Endothelial cell of umbilical vein (primary cell): ENCODE measurements at regions of chr9 and their contacts with region 1.

Region 1: GRCh38 chr9:22119537-22120158 is 110.5 kb upstream of the CDKN2B start:
- DNase-seq: peak; percentile 53
- H3K4me3 ChIP-seq: no peak overlapping the region
- H3K27ac ChIP-seq: no peak overlapping the region
- H3K4me1 ChIP-seq: peaks cover 26% of the 10 kb centered on the region
- H3K27me3 ChIP-seq: no peaks in the 10 kb centered on the region
- CTCF ChIP-seq: peak; percentile 35 to 53
- POLR2A ChIP-seq: no peak

Region 2: DNA sequence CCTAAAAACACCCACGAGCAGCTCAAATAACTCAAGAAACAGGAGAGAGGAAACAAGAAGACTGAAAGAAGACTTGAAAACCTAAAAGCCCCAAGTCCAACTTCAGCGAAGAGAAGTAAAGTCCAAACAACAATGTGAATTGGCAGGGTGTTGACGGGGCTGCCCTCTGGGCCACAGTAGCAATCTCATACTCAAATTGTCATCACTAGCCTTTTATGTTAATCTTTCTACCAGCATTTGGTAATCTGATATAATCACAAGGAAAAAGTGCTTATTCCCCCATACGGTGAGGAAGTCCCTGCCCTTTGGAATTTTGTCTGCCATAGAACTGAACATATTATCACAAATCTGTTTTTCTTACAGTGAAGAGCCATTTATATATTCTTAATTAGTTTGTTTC is 586.1 kb before region 1 on chr9:
- CTCF ChIA-PET with region 1: no interaction called
- POLR2A ChIA-PET with region 1: no interaction called
- dilution Hi-C with region 1: no loop called
- intact Hi-C with region 1: no loop called
- DNase-seq: no peak
- H3K4me3 ChIP-seq: no peak overlapping the region
- H3K27ac ChIP-seq: no peak overlapping the region
- H3K4me1 ChIP-seq: no peaks in the 10 kb centered on the region
- H3K27me3 ChIP-seq: no peaks in the 10 kb centered on the region
- CTCF ChIP-seq: no peak
- POLR2A ChIP-seq: no peak

Region 3: DNA sequence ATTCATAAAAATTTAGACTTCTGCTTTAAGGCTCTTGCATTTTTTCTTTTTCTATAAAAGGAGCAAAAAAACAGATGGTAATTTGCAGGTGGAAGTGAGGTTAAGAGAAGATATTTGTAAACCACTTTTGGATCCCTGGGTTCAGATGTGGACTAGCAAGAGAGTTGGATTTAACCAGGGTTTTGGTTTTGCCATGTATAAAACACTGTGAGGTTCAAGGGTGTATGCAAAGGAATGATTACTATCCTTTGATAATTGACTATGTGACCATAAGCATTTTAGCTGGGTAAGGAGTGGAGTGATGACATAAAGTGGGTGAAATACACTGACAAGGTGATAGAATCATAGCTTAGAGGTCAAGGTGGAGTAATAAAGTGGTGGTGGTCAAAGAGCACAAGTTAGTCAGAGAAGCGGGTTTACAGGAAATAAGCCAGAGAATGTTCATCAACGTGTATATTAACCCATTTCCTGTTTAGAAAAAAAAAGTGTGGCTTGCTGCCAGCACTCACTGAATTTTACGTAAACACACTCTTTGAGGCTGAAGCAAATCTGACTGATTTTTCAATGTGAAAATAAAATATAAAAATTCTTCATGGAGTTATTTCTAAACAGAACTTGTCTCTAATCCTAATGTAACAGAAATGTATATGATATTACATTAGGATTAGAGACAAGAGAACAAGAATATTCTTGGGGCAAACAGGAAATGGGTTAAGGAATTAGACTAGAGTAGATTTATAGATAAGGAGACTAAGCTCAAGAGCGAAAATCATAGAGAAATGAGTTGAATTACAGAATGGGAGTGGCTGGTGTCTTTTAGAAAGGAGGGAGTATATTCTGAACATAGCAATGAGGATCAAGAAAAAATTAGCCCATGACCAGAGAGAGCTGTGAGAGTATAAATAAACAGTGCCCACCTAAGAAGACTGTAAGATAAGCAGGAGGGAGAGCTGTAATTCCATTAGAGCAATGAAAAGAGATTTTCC is 200.0 kb before region 1 on chr9:
- CTCF ChIA-PET with region 1: interaction called, 11 read pairs
- POLR2A ChIA-PET with region 1: no interaction called
- dilution Hi-C with region 1: no loop called
- intact Hi-C with region 1: no loop called
- DNase-seq: peak; percentile 95
- H3K4me3 ChIP-seq: no peak overlapping the region
- H3K27ac ChIP-seq: peak overlapping the region; percentile 24
- H3K4me1 ChIP-seq: peaks cover 18% of the 10 kb centered on the region
- H3K27me3 ChIP-seq: no peaks in the 10 kb centered on the region
- CTCF ChIP-seq: no peak
- POLR2A ChIP-seq: no peak

Region 4: DNA sequence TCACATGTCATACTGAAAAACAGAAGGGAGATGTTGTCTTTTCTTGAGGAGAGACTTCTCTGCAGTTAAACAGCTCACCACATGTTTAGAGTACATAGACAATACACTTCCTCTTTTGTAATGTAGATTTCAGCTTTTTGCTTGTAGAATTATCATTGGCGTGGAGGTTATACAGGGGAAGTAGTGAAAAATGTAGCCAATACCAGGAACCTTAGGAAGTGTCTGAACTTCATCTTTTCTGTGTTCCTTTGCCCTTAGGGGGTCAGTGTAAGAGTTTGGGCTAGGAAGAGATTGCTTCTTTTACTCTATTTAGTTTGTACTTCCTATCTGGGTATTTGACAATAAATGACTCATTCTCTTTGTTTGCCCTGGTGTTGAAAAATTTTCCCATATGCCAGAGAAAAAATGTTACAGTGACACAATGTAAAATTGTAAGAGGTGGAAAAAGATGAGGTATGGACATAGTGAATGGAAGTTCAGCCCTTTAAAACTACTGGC is 89.5 kb before region 1 on chr9:
- CTCF ChIA-PET with region 1: interaction called, 15 read pairs
- POLR2A ChIA-PET with region 1: no interaction called
- dilution Hi-C with region 1: no loop called
- intact Hi-C with region 1: no loop called
- DNase-seq: peak; percentile 83
- H3K4me3 ChIP-seq: no peak overlapping the region
- H3K27ac ChIP-seq: peak overlapping the region; percentile 44
- H3K4me1 ChIP-seq: peaks cover 12% of the 10 kb centered on the region
- H3K27me3 ChIP-seq: no peaks in the 10 kb centered on the region
- CTCF ChIP-seq: no peak
- POLR2A ChIP-seq: no peak

Region 5: DNA sequence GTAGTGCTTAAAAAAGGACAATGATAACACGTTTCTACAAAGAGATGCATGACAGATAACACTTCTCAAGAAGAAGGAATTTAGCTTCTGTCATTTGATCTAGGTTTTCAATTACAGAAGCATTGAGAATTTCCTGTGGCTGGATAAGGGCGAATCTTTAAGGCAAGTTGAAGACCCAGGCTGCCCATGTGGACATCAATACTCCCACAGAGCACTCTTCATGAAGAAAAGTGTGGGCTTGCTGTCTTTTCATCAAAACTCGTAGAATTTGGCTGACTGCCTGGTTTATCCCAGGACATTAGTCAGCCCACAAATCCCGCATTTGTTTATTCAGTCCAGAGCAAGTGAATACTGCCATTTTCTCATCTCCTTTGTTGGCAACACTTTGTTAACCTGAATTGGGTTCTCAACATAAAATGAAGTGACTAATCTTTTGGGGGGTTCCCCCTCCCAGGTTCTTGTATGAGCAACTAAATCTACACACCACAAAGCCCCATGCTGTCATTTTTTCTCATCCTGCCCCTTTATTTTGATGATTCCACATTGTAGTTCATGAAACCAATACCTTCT is 67.2 kb before region 1 on chr9:
- CTCF ChIA-PET with region 1: interaction called, 28 read pairs
- POLR2A ChIA-PET with region 1: no interaction called
- dilution Hi-C with region 1: no loop called
- intact Hi-C with region 1: no loop called
- DNase-seq: peak; percentile 94
- H3K4me3 ChIP-seq: no peak overlapping the region
- H3K27ac ChIP-seq: peak overlapping the region; percentile 51
- H3K4me1 ChIP-seq: peaks cover 35% of the 10 kb centered on the region
- H3K27me3 ChIP-seq: no peaks in the 10 kb centered on the region
- CTCF ChIP-seq: no peak
- POLR2A ChIP-seq: peak; percentile 20

Region 6: DNA sequence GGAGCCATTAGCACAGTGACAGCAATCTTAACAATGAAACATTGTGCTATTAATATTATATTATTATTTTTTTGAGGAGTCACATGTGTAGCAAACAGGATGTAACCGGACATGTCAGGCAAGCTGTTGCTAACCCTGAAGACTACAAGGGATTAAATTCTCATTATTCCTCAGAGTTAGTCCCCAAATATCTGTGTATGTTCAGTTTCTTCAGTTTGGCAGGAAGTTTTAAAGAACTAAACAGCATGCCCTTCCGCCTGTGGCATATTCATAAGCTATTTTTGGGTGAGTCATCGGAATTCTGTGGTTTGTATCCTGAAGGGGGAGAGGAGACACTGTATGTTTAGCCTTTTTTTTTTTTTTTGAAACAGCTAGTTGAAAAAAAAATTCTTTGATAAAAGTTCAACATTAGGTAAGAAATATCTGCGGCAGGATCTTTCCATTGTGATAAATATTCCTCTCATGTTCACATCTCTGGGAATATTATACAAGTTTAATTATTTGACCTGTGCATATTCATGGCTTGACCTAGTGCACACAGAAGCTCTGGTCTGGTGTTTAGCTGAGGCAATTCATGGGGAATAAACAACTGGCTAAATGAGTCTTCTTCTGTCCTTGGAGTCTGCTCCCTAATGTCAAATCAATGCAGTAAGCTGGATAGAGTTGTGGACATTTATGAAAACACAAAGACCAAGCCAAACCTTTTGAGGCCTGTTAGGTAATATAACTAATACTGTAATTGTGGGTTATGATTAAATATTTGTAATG is 92.1 kb after region 1 on chr9:
- CTCF ChIA-PET with region 1: interaction called, 7 read pairs
- POLR2A ChIA-PET with region 1: no interaction called
- dilution Hi-C with region 1: no loop called
- intact Hi-C with region 1: loop called (anchors 5 kb)
- DNase-seq: peak; percentile 92
- H3K4me3 ChIP-seq: no peak overlapping the region
- H3K27ac ChIP-seq: peak overlapping the region; percentile 21
- H3K4me1 ChIP-seq: peaks cover 30% of the 10 kb centered on the region
- H3K27me3 ChIP-seq: no peaks in the 10 kb centered on the region
- CTCF ChIP-seq: no peak
- POLR2A ChIP-seq: no peak

Region 7: DNA sequence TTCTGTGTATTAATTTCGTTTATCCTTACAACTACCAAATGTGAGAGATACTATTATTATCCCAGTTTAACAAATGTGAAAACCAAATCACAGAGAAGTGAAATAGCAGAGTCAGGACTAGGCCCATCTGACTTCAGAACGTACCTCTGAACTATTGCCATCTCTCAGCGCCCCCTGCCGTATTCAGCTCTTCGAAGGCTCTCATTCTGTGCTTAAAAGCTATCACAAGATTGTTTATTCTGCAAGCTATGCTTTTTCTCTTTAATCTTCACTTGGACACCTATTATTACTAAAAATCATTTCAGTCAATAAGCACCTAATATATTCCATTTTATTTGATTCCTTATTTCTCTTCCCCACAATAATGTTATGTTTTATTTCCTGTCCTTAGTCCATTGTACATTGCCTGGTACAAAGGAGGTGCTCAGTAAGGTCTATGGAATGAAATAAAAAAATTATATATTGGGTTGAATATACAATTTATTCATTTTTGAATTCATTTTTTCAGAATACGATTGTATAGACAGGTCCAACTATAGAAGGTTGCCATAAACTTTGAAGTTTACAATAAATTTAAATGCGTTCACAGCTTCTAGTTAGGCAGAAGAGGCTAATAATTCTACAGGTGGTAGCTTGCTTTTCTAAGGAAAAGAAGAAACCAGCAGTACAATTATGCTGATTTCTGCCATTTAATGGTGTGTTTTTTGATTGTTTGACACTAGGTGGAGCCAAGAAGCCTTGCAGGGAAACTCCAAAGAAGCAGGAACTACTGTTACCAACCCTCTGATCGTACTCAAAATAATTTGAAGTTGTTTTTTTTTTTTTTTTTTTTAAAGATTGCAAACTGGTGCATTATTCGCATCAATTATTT is 124.7 kb after region 1 on chr9:
- CTCF ChIA-PET with region 1: interaction called, 29 read pairs
- POLR2A ChIA-PET with region 1: no interaction called
- dilution Hi-C with region 1: no loop called
- intact Hi-C with region 1: loop called (anchors 2 kb)
- DNase-seq: peak; percentile 47
- H3K4me3 ChIP-seq: no peak overlapping the region
- H3K27ac ChIP-seq: no peak overlapping the region
- H3K4me1 ChIP-seq: peaks cover 6% of the 10 kb centered on the region
- H3K27me3 ChIP-seq: peaks cover 4 to 7% of the 10 kb centered on the region in 2 experiments
- CTCF ChIP-seq: peak; percentile 28 to 58
- POLR2A ChIP-seq: no peak